ENCODE measurements at regions of chr12 and their contacts with region 1.

Region 1: GRCh38 chr12:12376646-12377448 is 20.0 kb downstream of the BORCS5 start:
- DNase-seq: no peak
- H3K4me3 ChIP-seq: no peak overlapping the region
- H3K27ac ChIP-seq: peak overlapping the region in 1 of 8 donors; percentile 6
- H3K4me1 ChIP-seq: peaks cover 0 to 47% (median 16%) of the 10 kb centered on the region in 6 donors
- H3K27me3 ChIP-seq: no peaks in the 10 kb centered on the region
- CTCF ChIP-seq: peak; percentile 55 to 84 (median 75)
- POLR2A ChIP-seq: no peak

Region 2: GRCh38 chr12:12562585-12563261 is 185.9 kb after region 1 on chr12 and contains the start of gene DUSP16:
- intact Hi-C with region 1: loop called (anchors 5 kb)
- DNase-seq: peak; percentile 96
- H3K4me3 ChIP-seq: peak within 1 kb of the TSS; percentile 48 to 77 (median 59)
- H3K27ac ChIP-seq: peak within 1 kb of the TSS; percentile 81 to 99 (median 98)
- H3K4me1 ChIP-seq: peaks cover 14 to 45% (median 29%) of the 10 kb centered on the region in 6 donors
- H3K27me3 ChIP-seq: no peaks in the 10 kb centered on the region
- CTCF ChIP-seq: peak in 8 of 11 experiments; percentile 6 to 53 (median 30)
- POLR2A ChIP-seq: peak in 2 of 3 donors; percentile 42 to 81
- total RNA-seq, gene DUSP16: 19.2 to 43.7 (median 22.1) TPM

Region 3: DNA sequence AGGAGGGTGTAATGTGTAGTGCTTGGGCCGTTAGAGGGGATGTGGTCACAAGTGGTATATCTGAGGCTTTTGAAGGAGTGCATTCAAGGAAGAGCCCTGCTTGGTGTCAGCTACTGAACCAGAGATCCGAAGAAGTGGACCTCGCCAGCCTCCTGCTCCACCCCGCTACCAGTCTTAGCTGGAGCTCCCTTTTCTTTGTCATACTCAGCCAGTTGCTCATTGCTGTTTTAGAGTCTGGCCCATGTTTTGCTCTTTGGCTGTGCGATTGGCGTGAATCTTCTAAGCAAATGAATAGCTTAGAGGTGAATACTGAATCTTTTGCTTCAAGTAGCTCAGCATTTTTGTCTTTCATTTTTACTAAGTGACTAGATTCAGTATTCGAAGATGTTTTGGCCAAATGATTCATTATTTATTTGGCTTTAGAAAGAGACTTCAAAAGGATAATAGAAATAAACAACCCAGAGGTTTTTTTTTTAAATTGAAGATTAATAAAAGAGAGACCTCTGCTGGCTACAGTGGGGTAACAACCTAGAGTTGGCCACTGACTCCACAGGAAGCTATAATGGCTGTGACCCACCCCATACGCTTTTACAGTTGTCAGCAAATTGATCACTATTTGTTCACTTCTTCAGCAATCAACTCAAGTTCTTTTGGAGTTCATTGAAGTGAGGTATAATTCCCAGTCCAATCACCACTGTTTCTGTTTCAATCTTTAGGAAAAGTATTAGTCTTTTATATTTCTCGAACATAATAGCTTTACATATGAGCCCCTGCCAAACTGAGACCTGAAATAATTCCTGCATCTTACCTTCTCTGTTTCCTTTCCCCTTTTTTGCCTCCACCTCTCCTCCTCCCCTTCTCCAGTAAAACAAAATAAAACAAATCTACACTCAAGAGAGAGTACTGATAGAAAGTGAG is 360.2 kb after region 1 on chr12:
- intact Hi-C with region 1: loop called (anchors 10 kb)
- DNase-seq: no peak
- H3K4me3 ChIP-seq: peak overlapping the region in 3 of 8 donors; percentile 0 to 36 (median 11)
- H3K27ac ChIP-seq: peak overlapping the region in 7 of 8 donors; percentile 54 to 82 (median 80)
- H3K4me1 ChIP-seq: peaks cover 15 to 59% (median 36%) of the 10 kb centered on the region in 6 donors
- H3K27me3 ChIP-seq: no peaks in the 10 kb centered on the region
- CTCF ChIP-seq: peak; percentile 54 to 90 (median 74)
- POLR2A ChIP-seq: no peak